Dorsolateral prefrontal cortex (tissue), 120 donors: ENCODE measurements at regions of chr16 and their contacts with region 1.

Region 1: DNA sequence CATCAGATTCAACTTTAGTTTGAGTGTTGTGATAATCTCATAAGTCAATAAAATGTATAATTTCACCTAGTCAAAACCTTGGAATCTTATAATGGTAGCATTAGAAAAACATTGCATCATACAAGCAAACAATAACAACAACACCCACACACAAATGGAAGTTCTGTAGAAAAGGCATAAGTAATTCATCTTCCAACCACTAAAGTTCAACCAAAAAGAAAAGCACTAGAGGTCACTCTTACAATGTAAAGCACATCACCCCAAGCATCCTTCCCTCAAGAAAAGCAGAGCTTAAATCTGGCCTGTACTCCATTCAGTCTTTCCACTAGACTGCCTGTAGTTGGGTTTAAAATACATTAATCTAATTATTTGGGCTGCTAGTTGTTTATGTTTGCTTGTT is 1.8 kb downstream of the CNTNAP4 start:
- DNase-seq: no peak
- H3K4me3 ChIP-seq: peak overlapping the region; percentile 26 to 80 (median 63)
- H3K27ac ChIP-seq: peak overlapping the region in 55 of 59 donors; percentile 27 to 95 (median 86)
- H3K27me3 ChIP-seq: no peaks in the 10 kb centered on the region
- CTCF ChIP-seq: peak; percentile 9 to 80 (median 66)

Region 2: GRCh38 chr16:75801307-75801706 is 477.7 kb before region 1 on chr16:
- intact Hi-C with region 1: loop called (anchors 5 kb)
- DNase-seq: no peak
- H3K4me3 ChIP-seq: no peak overlapping the region
- H3K27ac ChIP-seq: peak overlapping the region in 8 of 59 donors; percentile 1 to 60 (median 32)
- H3K27me3 ChIP-seq: no peaks in the 10 kb centered on the region
- CTCF ChIP-seq: peak in 54 of 56 donors; percentile 27 to 78 (median 58)

Region 3: DNA sequence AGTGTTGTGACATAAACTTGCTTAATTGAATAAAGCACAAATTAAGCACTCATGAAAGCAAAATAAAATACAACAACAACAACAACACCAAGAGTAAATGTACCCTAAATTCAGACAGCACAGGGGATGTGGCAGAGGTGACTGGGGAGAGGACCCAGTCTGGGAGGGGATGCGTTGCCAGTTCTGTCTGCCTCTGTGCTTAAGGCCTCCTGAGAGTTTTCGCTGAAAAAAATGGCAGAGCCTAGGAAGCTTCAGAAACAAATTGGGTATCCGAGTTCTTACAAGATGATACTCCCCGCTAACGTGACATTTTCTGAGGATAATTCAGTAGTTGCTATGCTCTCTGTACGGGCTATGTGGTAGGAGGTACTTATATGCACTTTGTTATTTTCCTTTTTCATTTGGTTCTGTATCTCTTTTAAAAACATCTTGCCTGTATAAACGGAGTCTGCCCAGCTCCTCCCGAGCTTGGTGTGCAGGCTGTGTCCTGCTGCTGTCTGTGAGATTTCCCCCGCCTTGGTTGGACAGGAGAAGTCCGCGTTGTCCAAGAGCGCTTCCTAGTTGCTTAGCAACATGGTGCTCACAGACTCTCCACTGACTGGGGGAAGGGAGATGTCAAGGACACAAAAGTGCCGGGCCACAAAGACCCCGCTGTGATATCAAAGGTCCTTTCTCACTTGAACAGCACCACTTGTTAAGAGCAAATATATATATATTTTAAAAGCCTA is 418.5 kb before region 1 on chr16:
- intact Hi-C with region 1: loop called (anchors 5 kb)
- DNase-seq: peak; percentile 49 to 86 (median 81)
- H3K4me3 ChIP-seq: peak overlapping the region in 57 of 59 donors; percentile 2 to 68 (median 44)
- H3K27ac ChIP-seq: peak overlapping the region in 58 of 59 donors; percentile 29 to 90 (median 78)
- H3K27me3 ChIP-seq: no peaks in the 10 kb centered on the region
- CTCF ChIP-seq: no peak

Region 4: DNA sequence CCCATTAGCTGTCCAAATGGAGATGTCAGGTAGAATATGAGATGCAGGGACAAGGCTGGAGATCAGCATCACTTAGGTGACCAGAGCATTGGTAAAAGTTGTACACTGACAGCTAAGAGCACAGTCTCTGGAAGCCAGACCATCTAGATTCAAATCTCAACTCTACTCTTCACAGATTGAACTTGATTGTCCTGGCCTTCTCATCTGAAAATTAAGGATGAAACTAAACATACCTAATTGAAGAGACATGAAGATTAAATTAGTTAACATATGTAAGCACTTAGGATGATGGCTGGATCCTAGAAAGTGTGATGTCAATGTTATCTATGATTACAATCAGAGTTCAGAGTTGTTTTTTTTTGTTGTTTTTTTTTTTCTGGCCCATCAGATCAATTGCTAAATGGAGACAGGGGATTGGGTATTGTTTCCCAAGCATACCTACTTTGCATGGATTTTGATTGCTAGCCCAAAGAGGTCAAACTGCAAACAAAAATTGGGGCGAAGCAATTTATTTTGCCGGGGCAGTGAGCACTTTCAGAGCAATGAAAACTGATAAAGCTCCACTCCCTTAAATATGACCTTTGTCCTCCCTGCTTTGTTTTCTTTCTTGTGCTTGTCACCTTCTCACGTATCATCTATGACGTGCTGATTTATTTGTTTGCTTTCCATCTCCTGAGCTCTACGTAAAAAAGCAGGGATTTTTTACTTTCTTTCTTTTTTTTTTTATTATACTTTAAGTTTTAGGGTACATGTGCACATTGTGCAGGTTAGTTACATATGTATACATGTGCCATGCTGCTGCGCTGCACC is 335.1 kb before region 1 on chr16:
- intact Hi-C with region 1: loop called in 1 of 2 experiments (anchors 10 kb)
- DNase-seq: no peak
- H3K4me3 ChIP-seq: no peak overlapping the region
- H3K27ac ChIP-seq: peak overlapping the region in 4 of 59 donors; percentile 0 to 14 (median 8)
- H3K27me3 ChIP-seq: no peaks in the 10 kb centered on the region
- CTCF ChIP-seq: no peak

Region 5: DNA sequence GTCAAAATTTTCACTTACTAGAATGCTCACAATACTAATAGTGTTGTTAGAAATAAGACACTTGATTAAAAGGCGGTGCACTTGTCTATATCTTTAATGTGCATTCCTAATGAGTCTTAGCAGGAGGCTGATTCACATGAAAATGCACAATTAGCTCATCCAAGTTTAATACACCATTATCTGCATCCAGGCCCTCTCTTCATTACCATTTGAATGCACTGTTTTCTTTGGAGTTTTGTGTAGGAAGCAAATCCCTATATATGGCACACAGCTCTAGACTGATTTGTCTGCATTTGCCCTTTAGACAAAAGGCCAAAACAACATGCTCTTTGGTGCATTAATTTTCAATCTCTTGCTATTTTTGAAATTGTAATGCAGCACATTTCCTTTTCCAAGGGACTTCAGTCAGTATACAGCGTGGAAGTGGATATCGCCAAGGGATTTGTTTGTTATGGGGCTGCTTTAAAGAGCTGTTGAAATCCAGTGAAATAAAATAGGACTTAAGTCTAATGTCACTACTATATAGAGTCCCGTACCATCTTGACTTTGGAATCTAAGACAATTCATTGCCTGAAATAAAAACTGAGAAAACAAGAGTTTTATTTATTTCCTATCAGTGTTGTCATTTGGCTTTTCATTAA is 295.1 kb before region 1 on chr16:
- intact Hi-C with region 1: loop called in 1 of 2 experiments (anchors 5 kb)
- DNase-seq: no peak
- H3K4me3 ChIP-seq: no peak overlapping the region
- H3K27ac ChIP-seq: peak overlapping the region in 11 of 59 donors; percentile 3 to 49 (median 31)
- H3K27me3 ChIP-seq: no peaks in the 10 kb centered on the region
- CTCF ChIP-seq: no peak

Region 6: GRCh38 chr16:76360404-76360803 is 81.4 kb after region 1 on chr16:
- intact Hi-C with region 1: no loop called
- DNase-seq: no peak
- H3K4me3 ChIP-seq: no peak overlapping the region
- H3K27ac ChIP-seq: peak overlapping the region in 14 of 59 donors; percentile 6 to 70 (median 46)
- H3K27me3 ChIP-seq: no peaks in the 10 kb centered on the region
- CTCF ChIP-seq: no peak

Region 7: DNA sequence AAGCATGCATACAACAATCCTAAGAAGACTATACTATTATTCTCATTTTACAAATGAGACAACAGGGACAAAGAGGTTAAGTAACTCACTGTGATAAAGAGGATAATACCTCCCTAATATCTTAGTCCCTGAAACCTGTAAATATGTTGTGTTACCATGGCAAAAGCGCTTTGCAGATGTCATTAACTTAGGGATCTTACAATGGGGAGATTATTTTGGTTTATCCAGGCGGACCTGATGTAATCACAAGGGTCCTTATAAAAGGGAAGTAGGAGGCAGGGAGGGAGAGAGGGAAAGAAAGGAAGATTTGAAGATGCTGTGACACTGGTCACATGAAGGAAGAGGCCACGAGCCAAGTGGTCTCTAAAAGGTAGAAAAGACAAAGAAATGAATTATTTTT is 162.9 kb after region 1 on chr16:
- intact Hi-C with region 1: loop called in 1 of 2 experiments (anchors 10 kb)
- DNase-seq: no peak
- H3K4me3 ChIP-seq: no peak overlapping the region
- H3K27ac ChIP-seq: peak overlapping the region in 12 of 59 donors; percentile 1 to 61 (median 20)
- H3K27me3 ChIP-seq: no peaks in the 10 kb centered on the region
- CTCF ChIP-seq: no peak

Region 8: GRCh38 chr16:76653390-76654026 is 374.5 kb after region 1 on chr16:
- intact Hi-C with region 1: loop called (anchors 2 to 5 kb)
- DNase-seq: peak in 3 of 10 donors; percentile 43 to 59 (median 47)
- H3K4me3 ChIP-seq: no peak overlapping the region
- H3K27ac ChIP-seq: peak overlapping the region in 6 of 59 donors; percentile 15 to 42 (median 26)
- H3K27me3 ChIP-seq: no peaks in the 10 kb centered on the region
- CTCF ChIP-seq: peak in 55 of 56 donors; percentile 35 to 85 (median 73)